K562 (cell line): ENCODE measurements at regions of chr12 and their contacts with region 1.

Region 1: DNA sequence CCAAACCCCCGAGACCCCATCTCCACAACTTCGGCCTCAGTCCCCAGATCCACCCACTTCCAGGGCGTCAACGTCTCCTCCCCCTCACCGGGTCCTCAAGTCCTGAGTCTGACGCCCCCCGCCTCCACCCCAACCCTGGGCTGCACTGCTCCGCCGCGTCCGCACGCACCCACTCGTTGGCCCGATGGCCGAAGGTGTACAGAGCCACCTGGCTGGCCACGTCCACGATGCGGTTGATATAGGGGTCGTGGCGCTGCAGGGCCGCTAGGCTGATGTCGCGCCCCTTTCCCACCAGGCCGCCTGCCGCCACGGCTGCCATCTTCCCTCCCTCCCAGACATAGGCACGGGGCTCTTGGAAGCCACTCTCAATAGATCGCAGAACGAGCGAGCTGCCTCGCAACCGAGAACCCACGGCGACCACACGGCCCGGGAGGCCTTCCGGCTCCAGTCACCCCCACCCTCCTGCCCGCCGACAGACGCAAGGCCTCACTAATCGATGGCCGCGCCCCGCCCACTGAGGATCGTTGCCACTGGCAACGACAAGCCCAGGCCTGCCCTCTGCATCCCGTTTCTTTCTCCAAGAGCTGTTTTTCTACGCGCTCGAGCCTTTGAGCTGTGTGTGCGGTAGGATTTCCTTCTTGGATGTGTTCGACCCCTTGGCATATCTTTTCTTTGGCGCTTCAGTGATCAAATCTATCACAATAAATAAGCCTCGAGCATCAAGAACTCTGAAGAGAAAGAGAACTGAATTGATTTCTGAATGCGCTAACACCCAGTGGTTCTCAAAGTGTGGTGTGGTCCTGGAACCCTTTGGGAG is at the start of gene DCP1B:
- DNase-seq: peak; percentile 87 to 93 (median 90)
- ATAC-seq: peak; percentile 100
- H3K4me3 ChIP-seq: peak within 1 kb of the TSS; percentile 94
- H3K27ac ChIP-seq: peak within 1 kb of the TSS; percentile 70
- H3K4me1 ChIP-seq: peaks cover 0 to 3% of the 10 kb centered on the region in 2 experiments; a peak in 1 of 5 replicates
- H3K27me3 ChIP-seq: no peaks in the 10 kb centered on the region
- CTCF ChIP-seq: no peak
- EP300 ChIP-seq: no peak
- POLR2A ChIP-seq: peak; percentile 79
- RAD21 ChIP-seq: no peak
- polyA plus RNA-seq, gene DCP1B: 0.83 to 1.5 TPM

Region 2: DNA sequence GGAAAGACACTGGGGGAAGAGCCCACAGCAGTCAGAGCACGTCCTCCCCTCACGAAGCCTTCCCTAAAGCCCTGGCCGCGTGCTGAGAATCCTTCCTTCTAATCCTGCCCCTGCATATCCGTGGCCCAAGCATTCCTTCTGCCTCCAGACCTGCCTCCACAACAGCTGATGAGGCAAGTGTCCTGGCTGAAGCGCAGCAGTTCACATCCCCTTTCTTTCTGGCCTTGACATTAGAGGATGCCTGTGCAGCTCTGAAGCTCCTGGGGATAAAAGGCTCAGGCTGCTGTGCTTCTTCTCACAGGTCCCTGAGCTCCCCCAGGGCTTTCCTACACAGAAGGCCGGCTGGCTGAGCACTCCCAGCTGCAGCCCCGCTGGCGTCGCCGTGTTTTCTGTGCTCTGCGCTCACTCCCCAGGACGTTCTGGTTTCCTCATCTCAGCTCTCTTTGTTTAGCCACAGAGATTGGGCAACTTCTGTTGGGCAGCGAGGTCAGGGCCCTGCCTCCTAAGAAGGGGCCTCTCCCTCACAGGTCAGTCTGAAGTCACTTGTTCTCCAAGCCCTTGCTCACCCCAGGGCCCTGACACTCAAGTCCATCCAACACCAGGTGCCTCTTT is 1386.9 kb before region 1 on chr12:
- CTCF ChIA-PET with region 1: no interaction called
- POLR2A ChIA-PET with region 1: no interaction called
- in situ Hi-C with region 1: no loop called
- intact Hi-C with region 1: no loop called
- DNase-seq: no peak
- ATAC-seq: no peak
- H3K4me3 ChIP-seq: no peak overlapping the region
- H3K27ac ChIP-seq: no peak overlapping the region
- H3K4me1 ChIP-seq: peaks cover 0 to 2% of the 10 kb centered on the region in 2 experiments; a peak in 2 of 5 replicates
- H3K27me3 ChIP-seq: no peaks in the 10 kb centered on the region
- CTCF ChIP-seq: no peak
- EP300 ChIP-seq: no peak
- POLR2A ChIP-seq: no peak
- RAD21 ChIP-seq: no peak

Region 3: DNA sequence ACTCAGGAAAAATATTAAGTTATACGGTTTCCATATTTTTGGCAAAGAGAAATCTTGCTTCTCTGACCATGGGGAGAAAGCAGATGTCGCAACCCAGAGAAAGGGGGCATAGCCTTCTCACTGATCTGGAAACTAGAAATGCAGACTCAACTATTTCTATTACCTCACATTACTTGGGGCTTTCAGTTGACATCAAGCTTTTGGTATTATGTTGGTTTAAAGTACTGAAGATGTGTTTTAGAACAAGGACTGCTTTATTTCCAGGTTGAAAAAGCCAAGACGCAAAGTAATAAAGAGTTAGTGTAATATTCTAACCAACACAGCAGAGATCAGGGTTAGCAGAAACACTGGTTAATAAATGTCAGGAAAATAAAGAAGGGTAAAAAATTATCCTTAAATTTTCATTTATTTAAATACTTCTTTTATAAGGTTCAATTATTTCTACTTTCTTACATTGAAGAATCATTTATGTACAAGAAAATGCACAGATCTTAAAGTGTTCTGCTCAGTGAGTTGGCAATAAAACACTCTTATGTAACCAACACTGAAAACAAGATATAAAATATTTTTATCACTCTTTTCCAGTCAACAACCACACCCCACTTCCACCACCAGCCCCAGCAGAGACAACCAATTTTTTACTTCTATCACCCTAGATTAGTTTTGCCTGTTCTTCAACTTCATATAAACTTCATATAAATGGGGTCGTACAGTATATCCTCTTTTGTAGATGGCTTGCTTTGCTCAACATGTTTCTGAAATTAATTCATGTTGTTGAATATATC is 26.1 kb before region 1 on chr12:
- CTCF ChIA-PET with region 1: no interaction called
- POLR2A ChIA-PET with region 1: no interaction called
- in situ Hi-C with region 1: no loop called
- intact Hi-C with region 1: loop called (anchors 2 kb)
- DNase-seq: no peak
- ATAC-seq: no peak
- H3K4me3 ChIP-seq: no peak overlapping the region
- H3K27ac ChIP-seq: no peak overlapping the region
- H3K4me1 ChIP-seq: no peaks in the 10 kb centered on the region
- H3K27me3 ChIP-seq: no peaks in the 10 kb centered on the region
- CTCF ChIP-seq: no peak
- EP300 ChIP-seq: no peak
- POLR2A ChIP-seq: no peak
- RAD21 ChIP-seq: no peak

Region 4: DNA sequence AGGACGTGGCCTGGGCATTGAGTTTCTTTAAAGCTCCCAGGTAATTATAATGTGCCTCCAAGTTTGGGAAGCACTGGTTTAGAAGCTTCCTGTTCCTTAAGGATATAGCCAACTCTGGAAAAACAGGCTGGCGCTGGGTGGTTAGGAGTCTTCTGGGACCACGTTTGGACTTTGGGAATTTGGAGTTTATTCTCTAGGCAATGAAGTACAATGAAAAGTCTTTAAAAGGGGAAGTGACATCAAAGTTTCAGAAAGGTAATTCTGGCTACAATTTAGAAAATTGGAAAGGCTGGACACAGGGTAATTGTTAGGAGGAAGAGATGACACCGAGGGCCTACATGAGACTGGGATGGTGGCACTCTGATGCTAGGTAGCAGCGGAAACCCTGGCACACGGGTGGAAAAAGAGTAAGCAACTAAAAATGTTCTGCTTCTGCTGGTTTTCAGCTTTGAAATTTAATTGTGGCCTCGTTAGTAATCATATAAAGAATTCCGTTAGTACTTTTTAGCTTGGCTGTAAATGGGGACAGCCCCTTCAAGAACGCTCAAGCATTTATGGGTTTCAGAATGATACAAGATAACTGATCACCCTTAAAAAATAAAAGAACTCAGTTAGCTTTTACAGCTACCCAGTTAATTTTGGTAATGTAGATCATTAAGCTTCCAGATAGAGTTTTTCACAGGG is 12.7 kb after region 1 on chr12:
- CTCF ChIA-PET with region 1: no interaction called
- POLR2A ChIA-PET with region 1: no interaction called
- in situ Hi-C with region 1: no loop called
- intact Hi-C with region 1: no loop called
- DNase-seq: no peak
- ATAC-seq: no peak
- H3K4me3 ChIP-seq: no peak overlapping the region
- H3K27ac ChIP-seq: no peak overlapping the region
- H3K4me1 ChIP-seq: no peaks in the 10 kb centered on the region
- H3K27me3 ChIP-seq: peaks cover 2 to 6% of the 10 kb centered on the region in 2 experiments; a peak in 1 of 5 replicates
- CTCF ChIP-seq: no peak
- EP300 ChIP-seq: no peak
- POLR2A ChIP-seq: no peak
- RAD21 ChIP-seq: no peak